ENCODE measurements at regions of chr4 and their contacts with region 1.

Region 1: GRCh38 chr4:141425124-141425523 is 204.4 kb downstream of the ZNF330 start:
- DNase-seq: no peak
- ATAC-seq: peak; percentile 98 to 100
- H3K4me3 ChIP-seq: no peak overlapping the region
- H3K27ac ChIP-seq: peak overlapping the region in 2 of 4 donors; percentile 11 to 20
- H3K4me1 ChIP-seq: peaks cover 5 to 7% of the 10 kb centered on the region in 2 donors
- H3K27me3 ChIP-seq: no peaks in the 10 kb centered on the region
- CTCF ChIP-seq: no peak
- POLR2A ChIP-seq: no peak

Region 2: DNA sequence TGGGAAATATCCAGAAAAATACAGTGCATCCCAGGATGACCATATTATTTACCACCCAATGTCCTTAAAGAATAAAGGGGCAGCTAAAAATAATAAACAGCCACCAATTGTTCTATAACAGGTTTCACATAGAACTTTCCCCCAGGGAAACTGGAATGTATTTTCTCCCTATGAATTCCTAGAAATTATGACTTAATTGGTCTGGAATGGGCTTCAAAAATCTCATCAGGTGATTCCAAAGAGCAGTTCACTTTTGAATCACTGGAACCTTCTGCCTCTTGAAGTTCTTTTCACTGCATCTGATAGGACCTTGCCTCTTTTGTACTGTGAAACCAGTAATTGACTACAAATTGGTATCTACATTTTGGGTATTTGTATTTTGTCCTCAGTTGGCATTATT is 85.2 kb before region 1 on chr4:
- in situ Hi-C with region 1: no loop called
- intact Hi-C with region 1: loop called (anchors 10 kb)
- DNase-seq: no peak
- ATAC-seq: no peak
- H3K4me3 ChIP-seq: no peak overlapping the region
- H3K27ac ChIP-seq: no peak overlapping the region
- H3K4me1 ChIP-seq: no peaks in the 10 kb centered on the region
- H3K27me3 ChIP-seq: no peaks in the 10 kb centered on the region
- CTCF ChIP-seq: no peak
- POLR2A ChIP-seq: no peak